Endothelial cell of umbilical vein (primary cell): ENCODE measurements at regions of chr2 and their contacts with region 1.

Region 1: DNA sequence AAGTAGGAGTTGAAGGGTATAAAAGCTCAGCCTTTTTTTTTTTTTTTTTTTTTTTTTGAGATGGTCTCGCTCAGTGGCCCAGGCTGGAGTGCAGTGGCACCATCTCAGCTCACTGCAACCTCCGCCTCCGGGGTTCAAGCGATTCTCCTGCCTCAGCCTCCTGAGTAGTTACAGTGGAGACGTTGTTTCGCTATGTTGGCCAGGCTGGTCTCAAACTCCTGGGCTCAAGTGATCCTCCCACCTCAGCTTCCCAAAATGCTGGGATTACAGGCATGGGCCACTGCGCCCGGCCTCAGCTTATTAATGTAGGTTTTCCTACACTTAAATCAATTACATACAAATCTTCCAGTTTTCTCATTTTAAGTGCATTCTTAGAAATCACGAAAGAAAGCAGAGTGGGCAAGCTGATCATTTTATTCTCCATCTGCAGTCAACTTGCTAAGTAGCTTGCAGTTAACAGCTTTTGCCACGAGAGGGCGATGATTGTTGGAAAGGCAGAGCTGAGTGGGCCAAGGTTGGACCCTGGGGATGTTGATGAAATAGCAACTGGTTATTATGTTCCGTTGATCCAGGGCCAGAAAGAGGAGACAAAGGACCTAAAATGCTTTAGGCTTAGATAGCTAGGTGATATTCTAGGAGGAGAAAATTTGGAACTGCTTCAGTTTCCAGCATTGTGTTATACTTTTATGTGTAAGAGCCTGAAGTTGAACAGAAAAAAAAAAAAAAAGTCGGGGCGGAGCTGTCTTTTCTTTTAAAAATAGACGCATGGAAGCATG is 234.4 kb upstream of the EPAS1 start:
- DNase-seq: peak; percentile 91
- H3K4me3 ChIP-seq: no peak overlapping the region
- H3K27ac ChIP-seq: peak overlapping the region; percentile 10
- H3K4me1 ChIP-seq: peaks cover 38% of the 10 kb centered on the region
- H3K27me3 ChIP-seq: no peaks in the 10 kb centered on the region
- CTCF ChIP-seq: peak; percentile 83 to 93
- POLR2A ChIP-seq: no peak

Region 2: DNA sequence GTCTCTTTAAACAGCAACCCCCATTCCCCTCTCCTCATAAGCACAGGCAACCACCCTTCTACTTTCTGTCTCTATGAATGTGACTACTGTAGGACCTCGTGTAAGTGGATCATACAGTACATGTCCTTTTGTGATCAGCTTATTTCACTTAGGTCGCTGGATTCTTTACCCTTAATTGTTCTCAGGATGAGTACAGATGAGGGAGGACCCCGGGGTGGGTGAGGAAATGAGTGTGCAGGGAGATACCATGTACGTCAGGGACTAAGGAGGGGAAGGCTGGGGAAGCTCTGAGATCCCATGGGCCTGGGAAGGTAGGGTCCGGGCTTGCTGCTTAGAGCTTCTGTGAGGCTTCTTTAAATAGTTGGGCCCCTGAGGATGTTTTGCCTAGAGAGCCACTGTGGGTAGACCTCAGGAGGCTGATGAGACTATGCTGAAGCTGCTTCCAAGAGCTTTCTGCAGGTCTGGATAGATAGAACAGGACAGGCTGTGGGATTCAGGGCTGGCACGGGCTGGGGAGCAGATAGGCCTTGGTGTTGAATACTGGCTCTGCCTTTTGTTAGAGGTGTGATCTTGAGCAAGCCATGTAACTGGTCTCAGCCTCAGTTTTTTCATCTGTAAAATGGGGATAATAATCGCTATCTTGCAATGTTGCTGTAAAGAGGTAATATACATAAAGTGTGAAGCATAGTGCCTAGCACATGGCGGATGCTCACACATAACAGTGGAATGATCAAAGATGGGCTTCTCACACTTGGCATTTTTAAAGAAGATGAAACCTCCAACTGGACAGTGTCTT is 256.1 kb before region 1 on chr2:
- CTCF ChIA-PET with region 1: no interaction called
- POLR2A ChIA-PET with region 1: no interaction called
- dilution Hi-C with region 1: no loop called
- intact Hi-C with region 1: no loop called
- DNase-seq: no peak
- H3K4me3 ChIP-seq: no peak overlapping the region
- H3K27ac ChIP-seq: no peak overlapping the region
- H3K4me1 ChIP-seq: peaks cover 8% of the 10 kb centered on the region
- H3K27me3 ChIP-seq: no peaks in the 10 kb centered on the region
- CTCF ChIP-seq: no peak
- POLR2A ChIP-seq: no peak

Region 3: DNA sequence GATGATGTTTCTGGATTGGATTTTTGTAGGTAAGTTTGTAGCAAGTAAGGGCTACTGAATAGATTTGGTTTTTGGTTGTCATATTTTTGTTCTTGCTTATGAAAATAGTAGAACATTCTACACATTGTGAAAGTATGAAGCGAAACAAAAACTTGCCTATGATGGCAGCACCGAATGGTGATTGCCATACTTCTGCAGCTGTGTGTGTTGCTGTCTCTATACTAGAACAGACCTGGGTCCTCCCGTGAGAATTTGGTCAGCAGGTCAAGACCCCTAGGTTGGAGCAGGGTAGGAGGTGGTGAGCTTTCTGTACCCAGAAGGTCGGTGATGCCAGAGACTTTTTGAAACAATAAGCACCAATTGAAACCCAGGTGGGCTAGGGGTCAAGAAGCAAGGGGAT is 88.8 kb before region 1 on chr2:
- CTCF ChIA-PET with region 1: no interaction called
- POLR2A ChIA-PET with region 1: no interaction called
- dilution Hi-C with region 1: no loop called
- intact Hi-C with region 1: no loop called
- DNase-seq: no peak
- H3K4me3 ChIP-seq: no peak overlapping the region
- H3K27ac ChIP-seq: no peak overlapping the region
- H3K4me1 ChIP-seq: no peaks in the 10 kb centered on the region
- H3K27me3 ChIP-seq: no peaks in the 10 kb centered on the region
- CTCF ChIP-seq: no peak
- POLR2A ChIP-seq: no peak

Region 4: DNA sequence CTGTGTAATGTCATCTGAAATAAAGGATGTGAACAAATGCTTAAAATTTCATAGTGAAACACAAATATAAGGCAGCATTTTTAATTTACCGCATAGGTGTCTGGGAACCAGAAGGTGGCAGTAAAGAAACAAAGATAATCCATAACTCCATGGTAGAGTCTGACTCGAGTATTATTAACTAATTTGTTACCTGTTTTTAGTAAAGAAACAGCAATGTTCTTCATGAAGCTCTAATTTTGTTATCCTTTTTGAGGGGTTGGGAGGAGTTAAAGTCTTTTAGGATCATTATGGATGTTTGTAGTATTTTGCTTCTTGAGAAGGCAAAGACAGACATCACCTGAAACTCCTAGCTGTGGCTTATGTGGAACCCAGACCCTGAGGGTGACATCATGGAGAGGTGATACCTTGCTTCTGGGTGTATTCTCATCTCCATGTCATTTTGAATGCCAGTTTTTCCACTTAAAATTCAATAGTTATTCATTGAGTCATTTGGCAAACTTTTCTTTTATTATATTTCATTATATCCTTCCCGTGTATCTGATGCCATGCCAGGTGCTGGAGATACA is 51.8 kb before region 1 on chr2:
- CTCF ChIA-PET with region 1: interaction called, 20 read pairs
- POLR2A ChIA-PET with region 1: no interaction called
- dilution Hi-C with region 1: no loop called
- intact Hi-C with region 1: loop called (anchors 1 kb)
- DNase-seq: peak; percentile 72
- H3K4me3 ChIP-seq: no peak overlapping the region
- H3K27ac ChIP-seq: no peak overlapping the region
- H3K4me1 ChIP-seq: peaks cover 16% of the 10 kb centered on the region
- H3K27me3 ChIP-seq: no peaks in the 10 kb centered on the region
- CTCF ChIP-seq: peak; percentile 32 to 57
- POLR2A ChIP-seq: no peak

Region 5: DNA sequence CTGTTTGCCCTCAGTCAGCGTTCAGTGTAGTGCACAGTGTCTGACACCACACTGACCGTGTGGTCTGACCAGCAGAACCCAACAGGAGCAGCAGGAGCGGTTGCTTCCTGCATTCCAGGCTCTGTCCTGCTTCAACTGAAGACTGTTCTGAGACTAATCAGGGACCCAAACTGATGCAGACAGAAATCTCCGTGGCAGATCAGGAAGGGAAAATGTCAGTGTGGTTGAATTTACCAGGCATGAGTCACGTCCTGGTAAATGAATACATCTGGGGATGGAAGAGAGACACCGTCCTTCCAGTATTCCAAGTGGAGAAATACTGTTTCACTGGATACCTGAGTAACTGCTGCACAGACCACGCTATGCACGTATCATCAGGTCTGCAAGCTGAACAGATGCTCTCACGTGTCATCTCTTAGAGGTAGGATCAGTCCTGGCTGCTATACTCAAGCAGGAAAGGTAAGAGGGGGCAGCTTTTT is 10.8 kb after region 1 on chr2:
- CTCF ChIA-PET with region 1: interaction called, 18 read pairs
- POLR2A ChIA-PET with region 1: no interaction called
- dilution Hi-C with region 1: no loop called
- intact Hi-C with region 1: no loop called
- DNase-seq: peak; percentile 97
- H3K4me3 ChIP-seq: peak overlapping the region; percentile 13 to 88 (median 27)
- H3K27ac ChIP-seq: peak overlapping the region; percentile 84
- H3K4me1 ChIP-seq: peaks cover 71% of the 10 kb centered on the region
- H3K27me3 ChIP-seq: no peaks in the 10 kb centered on the region
- CTCF ChIP-seq: no peak
- POLR2A ChIP-seq: peak; percentile 65

Region 6: DNA sequence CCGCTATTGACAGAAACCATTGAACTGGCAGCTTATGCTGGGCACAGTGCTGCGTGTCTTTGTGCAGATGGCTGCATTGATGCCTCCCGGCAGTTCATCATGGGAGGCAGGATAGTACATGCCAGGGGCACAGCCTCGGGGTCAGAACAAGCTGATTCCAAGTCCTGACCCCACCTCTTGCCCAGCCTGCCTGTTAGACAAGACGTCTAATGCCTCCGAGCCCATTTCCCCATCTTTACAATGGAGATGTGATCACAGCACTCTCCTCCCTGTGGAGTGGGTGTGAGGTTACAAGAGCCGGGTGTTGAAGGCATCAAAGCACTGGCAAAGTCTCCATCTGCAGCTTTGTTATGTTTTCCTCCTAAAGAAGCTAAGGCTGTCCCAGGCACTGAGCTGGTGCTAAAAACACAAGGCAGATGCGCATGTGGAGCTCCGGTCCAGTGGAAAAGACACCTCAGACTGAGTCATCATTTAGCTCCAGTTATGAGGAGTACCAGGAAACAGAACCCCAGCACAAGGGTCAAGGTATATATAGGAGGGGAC is 108.7 kb after region 1 on chr2:
- CTCF ChIA-PET with region 1: interaction called, 16 read pairs
- POLR2A ChIA-PET with region 1: no interaction called
- dilution Hi-C with region 1: no loop called
- intact Hi-C with region 1: no loop called
- DNase-seq: peak; percentile 44
- H3K4me3 ChIP-seq: no peak overlapping the region
- H3K27ac ChIP-seq: no peak overlapping the region
- H3K4me1 ChIP-seq: peaks cover 20% of the 10 kb centered on the region
- H3K27me3 ChIP-seq: no peaks in the 10 kb centered on the region
- CTCF ChIP-seq: no peak
- POLR2A ChIP-seq: no peak

Region 7: GRCh38 chr2:46269544-46270273 is 206.9 kb after region 1 on chr2:
- CTCF ChIA-PET with region 1: interaction called, 10 read pairs
- POLR2A ChIA-PET with region 1: no interaction called
- dilution Hi-C with region 1: no loop called
- intact Hi-C with region 1: loop called (anchors 1 kb)
- DNase-seq: peak; percentile 51
- H3K4me3 ChIP-seq: no peak overlapping the region
- H3K27ac ChIP-seq: peak overlapping the region; percentile 41
- H3K4me1 ChIP-seq: peaks cover 73% of the 10 kb centered on the region
- H3K27me3 ChIP-seq: no peaks in the 10 kb centered on the region
- CTCF ChIP-seq: no peak
- POLR2A ChIP-seq: no peak

Region 8: DNA sequence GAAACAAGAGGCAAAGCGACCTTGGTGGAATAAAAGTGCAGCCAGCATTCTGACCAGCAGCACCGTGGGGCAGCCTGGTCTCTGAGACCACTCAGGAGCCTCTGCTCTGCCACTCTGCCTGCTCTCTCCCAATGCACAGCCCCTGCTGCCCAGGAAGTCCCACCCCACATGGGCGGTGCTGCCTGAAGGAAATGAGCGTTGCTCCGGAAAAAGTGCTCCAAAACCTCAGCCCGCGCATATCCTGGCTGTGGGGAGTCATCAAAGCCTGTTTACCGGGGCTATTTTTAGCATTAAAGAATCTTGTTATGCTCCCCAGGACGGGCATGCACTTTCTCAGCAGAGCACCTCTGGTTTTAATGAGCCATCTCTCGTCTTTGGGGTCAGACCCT is 288.9 kb after region 1 on chr2:
- CTCF ChIA-PET with region 1: interaction called, 14 read pairs
- POLR2A ChIA-PET with region 1: no interaction called
- dilution Hi-C with region 1: no loop called
- intact Hi-C with region 1: loop called (anchors 1 kb)
- DNase-seq: peak; percentile 95
- H3K4me3 ChIP-seq: peak overlapping the region in 1 of 3 experiments; percentile 10
- H3K27ac ChIP-seq: peak overlapping the region; percentile 61
- H3K4me1 ChIP-seq: peaks cover 50% of the 10 kb centered on the region
- H3K27me3 ChIP-seq: no peaks in the 10 kb centered on the region
- CTCF ChIP-seq: no peak
- POLR2A ChIP-seq: peak; percentile 51

Region 9: DNA sequence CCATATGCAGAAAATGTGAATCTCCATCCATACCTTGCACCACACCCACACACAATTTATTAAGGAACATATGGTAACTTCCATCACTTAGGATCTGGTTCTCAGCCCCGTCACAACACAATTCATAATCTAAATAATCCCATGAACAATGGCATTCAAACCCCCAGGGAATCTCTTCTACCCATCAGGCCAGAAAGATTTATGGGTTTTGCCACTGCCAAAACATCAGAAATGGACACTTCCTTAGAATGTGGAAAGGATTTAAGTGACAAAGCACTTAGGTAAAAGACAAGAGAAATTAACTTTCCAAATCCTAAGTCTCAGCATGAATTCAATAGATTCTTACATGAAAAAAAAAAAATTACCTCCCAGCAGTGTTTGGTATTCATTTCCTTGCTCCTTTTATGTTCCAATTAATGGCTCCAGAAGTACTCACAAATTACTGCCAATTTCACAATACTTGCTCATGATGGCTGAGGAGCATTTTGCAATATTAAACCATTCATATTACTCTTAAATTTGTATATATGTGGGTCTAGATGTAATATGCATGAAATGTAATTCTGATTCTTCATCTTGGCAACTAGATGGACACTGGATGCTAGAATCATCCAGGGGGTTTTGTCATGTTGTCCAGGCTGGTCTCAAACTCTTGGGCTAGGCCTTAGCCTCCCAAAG is 360.0 kb after region 1 on chr2:
- CTCF ChIA-PET with region 1: no interaction called
- POLR2A ChIA-PET with region 1: no interaction called
- dilution Hi-C with region 1: no loop called
- intact Hi-C with region 1: no loop called
- DNase-seq: no peak
- H3K4me3 ChIP-seq: no peak overlapping the region
- H3K27ac ChIP-seq: no peak overlapping the region
- H3K4me1 ChIP-seq: no peaks in the 10 kb centered on the region
- H3K27me3 ChIP-seq: no peaks in the 10 kb centered on the region
- CTCF ChIP-seq: no peak
- POLR2A ChIP-seq: no peak

Region 10: GRCh38 chr2:46570396-46570795 is 507.6 kb after region 1 on chr2:
- CTCF ChIA-PET with region 1: no interaction called
- POLR2A ChIA-PET with region 1: no interaction called
- dilution Hi-C with region 1: no loop called
- intact Hi-C with region 1: no loop called
- DNase-seq: no peak
- H3K4me3 ChIP-seq: no peak overlapping the region
- H3K27ac ChIP-seq: no peak overlapping the region
- H3K4me1 ChIP-seq: no peaks in the 10 kb centered on the region
- H3K27me3 ChIP-seq: no peaks in the 10 kb centered on the region
- CTCF ChIP-seq: no peak
- POLR2A ChIP-seq: no peak